ENCODE measurements at regions of chrX and their contacts with region 1.

Region 1: GRCh38 chrX:49163555-49164419 is 1.2 kb downstream of the MAGIX start:
- DNase-seq: peak; percentile 88 to 89
- ATAC-seq: peak; percentile 64 to 83 (median 78)
- H3K4me3 ChIP-seq: peak overlapping the region in 9 of 10 donors; percentile 17 to 58 (median 51)
- H3K27ac ChIP-seq: peak overlapping the region; percentile 87 to 96 (median 93)
- H3K4me1 ChIP-seq: peaks cover 0 to 29% (median 11%) of the 10 kb centered on the region in 9 donors
- H3K27me3 ChIP-seq: no peaks in the 10 kb centered on the region
- CTCF ChIP-seq: peak; percentile 58 to 84 (median 76)

Region 2: GRCh38 chrX:49002091-49002935 is 161.5 kb before region 1 on chrX and contains the start of gene GRIPAP1:
- intact Hi-C with region 1: no loop called
- DNase-seq: peak; percentile 66 to 74
- ATAC-seq: peak; percentile 88 to 98 (median 94)
- H3K4me3 ChIP-seq: peak within 1 kb of the TSS; percentile 47 to 82 (median 75)
- H3K27ac ChIP-seq: peak within 1 kb of the TSS; percentile 35 to 94 (median 84)
- H3K4me1 ChIP-seq: peaks cover 0 to 9% (median 0%) of the 10 kb centered on the region in 9 donors
- H3K27me3 ChIP-seq: no peaks in the 10 kb centered on the region
- CTCF ChIP-seq: no peak
- total RNA-seq, gene GRIPAP1: 16.2 to 26.0 (median 21.9) TPM

Region 3: GRCh38 chrX:49184294-49185061 is 20.7 kb after region 1 on chrX:
- intact Hi-C with region 1: loop called in 1 of 10 experiments (anchors 2 kb)
- DNase-seq: peak; percentile 90 to 92
- ATAC-seq: peak; percentile 83 to 92 (median 86)
- H3K4me3 ChIP-seq: peak overlapping the region in 9 of 10 donors; percentile 40 to 63 (median 58)
- H3K27ac ChIP-seq: peak overlapping the region in 9 of 10 donors; percentile 41 to 90 (median 80)
- H3K4me1 ChIP-seq: peaks cover 0 to 21% (median 6%) of the 10 kb centered on the region in 9 donors
- H3K27me3 ChIP-seq: no peaks in the 10 kb centered on the region
- CTCF ChIP-seq: peak in 1 of 9 donors; percentile 11

Measured in heart right ventricle (tissue), 16 donors.